Endothelial cell of umbilical vein (primary cell): ENCODE measurements at regions of chrX and their contacts with region 1.

Region 1: DNA sequence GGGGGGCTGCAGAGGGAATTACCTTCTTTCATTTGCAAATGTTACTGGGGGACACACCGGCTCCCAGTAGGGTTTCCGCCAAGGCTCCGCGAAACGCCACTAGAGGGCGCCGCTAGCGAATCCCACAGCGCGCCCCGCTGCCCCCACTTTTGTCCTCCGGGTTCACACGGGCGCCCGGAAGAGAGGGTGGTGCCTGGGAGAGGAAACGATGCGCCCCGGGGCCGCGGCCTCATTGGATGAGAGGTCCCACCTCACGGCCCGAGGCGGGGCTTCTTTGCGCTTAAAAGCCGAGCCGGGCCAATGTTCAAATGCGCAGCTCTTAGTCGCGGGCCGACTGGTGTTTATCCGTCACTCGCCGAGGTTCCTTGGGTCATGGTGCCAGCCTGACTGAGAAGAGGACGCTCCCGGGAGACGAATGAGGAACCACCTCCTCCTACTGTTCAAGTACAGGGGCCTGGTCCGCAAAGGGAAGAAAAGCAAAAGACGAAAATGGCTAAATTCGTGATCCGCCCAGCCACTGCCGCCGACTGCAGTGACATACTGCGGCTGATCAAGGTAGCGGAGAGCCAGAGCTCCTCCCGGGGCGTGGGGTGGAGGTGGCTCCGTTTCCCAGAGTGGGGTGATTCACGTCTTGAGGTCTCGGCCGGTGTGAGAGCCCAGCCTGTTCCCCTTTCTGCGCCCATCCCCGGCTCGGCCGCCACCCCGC is at the start of gene SAT1:
- DNase-seq: peak; percentile 92
- H3K4me3 ChIP-seq: peak within 1 kb of the TSS; percentile 56 to 90 (median 67)
- H3K27ac ChIP-seq: peak within 1 kb of the TSS; percentile 84
- H3K4me1 ChIP-seq: peaks cover 23% of the 10 kb centered on the region
- H3K27me3 ChIP-seq: no peaks in the 10 kb centered on the region
- CTCF ChIP-seq: peak; percentile 73 to 77
- POLR2A ChIP-seq: peak; percentile 99
- total RNA-seq, gene SAT1: 256 and 289 TPM in 2 replicates

Region 2: DNA sequence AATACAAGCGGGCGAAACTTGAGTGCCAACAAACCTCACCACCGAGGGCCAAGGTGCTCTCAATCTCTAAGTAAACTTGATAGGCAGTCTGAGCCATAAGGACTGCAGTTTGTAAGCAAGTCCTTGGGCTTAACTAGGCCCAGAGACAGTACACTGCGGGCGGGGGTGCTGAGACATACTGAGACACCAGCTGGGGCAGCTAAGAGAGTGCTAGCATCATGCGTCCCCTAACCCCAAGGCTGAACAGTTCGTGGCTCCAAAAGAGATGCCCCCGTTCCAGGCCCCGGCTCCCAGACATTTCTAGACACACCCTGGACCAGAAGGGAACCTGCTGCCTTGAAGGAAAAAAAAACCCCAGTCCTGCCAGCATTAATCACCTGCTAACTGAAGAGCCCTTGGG is 242.5 kb before region 1 on chrX:
- CTCF ChIA-PET with region 1: no interaction called
- POLR2A ChIA-PET with region 1: no interaction called
- dilution Hi-C with region 1: no loop called
- intact Hi-C with region 1: no loop called
- DNase-seq: no peak
- H3K4me3 ChIP-seq: no peak overlapping the region
- H3K27ac ChIP-seq: no peak overlapping the region
- H3K4me1 ChIP-seq: no peaks in the 10 kb centered on the region
- H3K27me3 ChIP-seq: no peaks in the 10 kb centered on the region
- CTCF ChIP-seq: no peak
- POLR2A ChIP-seq: no peak

Region 3: DNA sequence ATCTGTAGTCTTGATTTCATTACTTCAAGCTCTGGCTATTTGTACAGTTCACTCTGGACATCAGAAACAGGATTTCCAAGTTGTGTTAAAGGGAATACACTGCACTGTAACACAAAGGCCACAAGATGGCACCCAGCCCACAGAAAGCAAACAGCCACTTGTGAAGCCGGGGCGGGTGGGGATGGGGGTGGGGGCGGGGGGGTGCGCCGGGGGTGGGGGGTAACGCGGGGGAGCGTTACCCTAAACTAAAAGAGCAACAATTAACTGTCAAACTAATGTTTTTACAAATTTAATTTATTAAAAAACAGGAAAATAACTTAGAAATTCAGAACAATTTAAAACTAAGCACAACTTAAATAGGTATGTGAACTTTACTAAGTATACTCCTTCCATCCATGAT is 88.4 kb before region 1 on chrX:
- CTCF ChIA-PET with region 1: no interaction called
- POLR2A ChIA-PET with region 1: no interaction called
- dilution Hi-C with region 1: no loop called
- intact Hi-C with region 1: loop called (anchors 10 kb)
- DNase-seq: peak; percentile 42
- H3K4me3 ChIP-seq: no peak overlapping the region
- H3K27ac ChIP-seq: no peak overlapping the region
- H3K4me1 ChIP-seq: no peaks in the 10 kb centered on the region
- H3K27me3 ChIP-seq: no peaks in the 10 kb centered on the region
- CTCF ChIP-seq: peak; percentile 5 to 33
- POLR2A ChIP-seq: no peak

Region 4: GRCh38 chrX:23742697-23743622 is 40.1 kb before region 1 on chrX and contains the start of gene ACOT9:
- CTCF ChIA-PET with region 1: interaction called, 6 read pairs
- POLR2A ChIA-PET with region 1: interaction called, 16 read pairs
- dilution Hi-C with region 1: no loop called
- intact Hi-C with region 1: loop called (anchors 1 kb)
- DNase-seq: peak; percentile 94
- H3K4me3 ChIP-seq: peak within 1 kb of the TSS; percentile 46 to 94 (median 90)
- H3K27ac ChIP-seq: peak within 1 kb of the TSS; percentile 94
- H3K4me1 ChIP-seq: peaks cover 13% of the 10 kb centered on the region
- H3K27me3 ChIP-seq: no peaks in the 10 kb centered on the region
- CTCF ChIP-seq: no peak
- POLR2A ChIP-seq: peak; percentile 79
- total RNA-seq, gene ACOT9: 83.1 and 88.5 TPM in 2 replicates

Region 5: DNA sequence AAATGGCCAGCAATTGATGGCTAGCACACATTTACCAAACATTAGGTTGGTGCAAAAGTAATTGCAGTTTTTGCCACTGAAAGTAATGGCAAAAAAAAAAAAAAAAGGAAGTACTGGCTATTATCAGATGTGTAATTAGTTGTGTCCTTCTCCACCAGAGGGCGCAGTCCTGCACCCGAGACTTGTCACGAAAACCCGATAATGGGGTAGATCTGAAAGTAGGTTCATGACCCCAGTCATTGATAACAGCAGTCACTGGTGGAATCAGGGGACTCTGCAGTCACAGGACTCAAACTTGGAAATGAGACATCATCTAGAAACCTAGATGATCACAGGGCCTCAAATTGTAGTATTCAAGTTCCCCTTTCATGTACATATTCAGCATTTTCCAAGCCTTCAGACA is 26.9 kb before region 1 on chrX:
- CTCF ChIA-PET with region 1: interaction called, 4 read pairs
- POLR2A ChIA-PET with region 1: no interaction called
- dilution Hi-C with region 1: no loop called
- intact Hi-C with region 1: loop called (anchors 1 kb)
- DNase-seq: peak; percentile 54
- H3K4me3 ChIP-seq: no peak overlapping the region
- H3K27ac ChIP-seq: no peak overlapping the region
- H3K4me1 ChIP-seq: no peaks in the 10 kb centered on the region
- H3K27me3 ChIP-seq: no peaks in the 10 kb centered on the region
- CTCF ChIP-seq: peak; percentile 32 to 34
- POLR2A ChIP-seq: no peak

Region 6: DNA sequence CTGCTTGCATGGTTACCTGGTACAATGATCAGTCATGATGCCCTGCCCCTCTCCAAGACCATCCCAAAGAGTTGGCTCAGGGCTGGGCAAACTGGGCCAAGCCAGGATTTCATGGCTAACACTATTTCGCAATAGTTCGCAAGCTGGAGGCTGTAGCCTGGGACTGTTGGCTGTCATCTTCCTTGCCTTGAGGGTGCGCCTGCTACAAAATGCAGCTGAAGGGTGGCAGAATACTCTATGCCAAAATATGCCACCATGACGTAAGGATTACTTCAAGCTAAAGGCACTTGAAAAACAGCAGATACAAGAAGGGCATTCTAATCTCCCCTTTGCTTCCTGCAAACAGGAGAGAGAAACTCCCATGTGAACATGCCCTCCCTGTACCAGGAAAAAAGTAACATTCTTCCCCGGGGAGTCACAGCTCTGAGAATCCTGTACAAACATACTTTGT is 20.9 kb after region 1 on chrX:
- CTCF ChIA-PET with region 1: interaction called, 12 read pairs
- POLR2A ChIA-PET with region 1: interaction called, 18 read pairs
- dilution Hi-C with region 1: no loop called
- intact Hi-C with region 1: loop called (anchors 1 kb)
- DNase-seq: peak; percentile 86
- H3K4me3 ChIP-seq: no peak overlapping the region
- H3K27ac ChIP-seq: peak overlapping the region; percentile 74
- H3K4me1 ChIP-seq: peaks cover 29% of the 10 kb centered on the region
- H3K27me3 ChIP-seq: no peaks in the 10 kb centered on the region
- CTCF ChIP-seq: no peak
- POLR2A ChIP-seq: no peak

Region 7: DNA sequence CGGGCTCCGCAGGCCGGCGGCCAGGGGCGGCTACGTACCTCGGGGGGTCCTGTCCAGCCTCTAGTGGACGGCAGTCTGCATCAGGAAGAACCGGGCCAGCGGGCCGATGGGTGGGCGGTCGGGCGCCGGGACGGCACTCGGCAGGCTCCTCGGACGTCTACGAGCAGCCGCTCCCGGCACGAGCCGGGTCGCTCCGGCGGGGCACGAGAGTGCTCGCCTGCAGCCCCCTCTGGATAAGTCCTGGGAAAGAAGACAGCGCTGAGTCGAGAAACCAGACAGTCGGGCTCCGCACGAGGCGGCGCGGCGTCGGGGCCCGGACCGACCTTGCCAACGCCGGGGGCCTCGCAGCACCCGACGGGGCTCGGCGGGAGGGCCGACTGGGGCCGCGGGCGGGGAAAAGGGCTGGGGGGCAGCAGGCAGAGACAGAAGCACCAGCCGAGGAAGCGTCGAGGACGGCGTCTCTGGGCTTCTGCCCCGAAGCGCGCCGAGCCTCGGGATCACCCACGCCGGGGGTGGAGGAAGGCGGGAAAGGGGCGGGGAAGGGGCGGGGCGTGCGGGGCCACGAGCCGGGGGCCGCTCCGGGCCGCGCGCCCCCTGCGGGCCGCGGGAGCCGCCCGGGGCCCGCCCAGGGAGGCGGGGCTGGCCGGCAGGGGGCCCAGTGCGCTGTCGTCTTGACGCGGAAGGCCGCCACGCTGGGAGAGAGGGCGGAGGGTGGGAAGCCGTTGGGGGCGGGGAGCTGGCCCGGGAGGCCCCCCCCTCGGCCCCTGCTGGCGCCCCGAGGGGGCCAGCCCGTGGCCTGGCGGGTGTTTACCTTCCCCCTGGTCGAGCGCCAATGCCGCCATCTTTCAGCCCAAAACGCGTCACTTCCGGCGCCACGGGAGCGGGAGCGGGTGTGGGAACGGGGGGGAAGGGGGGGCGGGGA is 242.1 kb after region 1 on chrX:
- CTCF ChIA-PET with region 1: no interaction called
- POLR2A ChIA-PET with region 1: interaction called, 5 read pairs
- dilution Hi-C with region 1: no loop called
- intact Hi-C with region 1: loop called (anchors 5 kb)
- DNase-seq: peak; percentile 86
- H3K4me3 ChIP-seq: peak overlapping the region; percentile 81 to 93 (median 86)
- H3K27ac ChIP-seq: peak overlapping the region; percentile 90
- H3K4me1 ChIP-seq: peaks cover 8% of the 10 kb centered on the region
- H3K27me3 ChIP-seq: no peaks in the 10 kb centered on the region
- CTCF ChIP-seq: peak in 1 of 2 donors; percentile 20
- POLR2A ChIP-seq: peak; percentile 81

Region 8: DNA sequence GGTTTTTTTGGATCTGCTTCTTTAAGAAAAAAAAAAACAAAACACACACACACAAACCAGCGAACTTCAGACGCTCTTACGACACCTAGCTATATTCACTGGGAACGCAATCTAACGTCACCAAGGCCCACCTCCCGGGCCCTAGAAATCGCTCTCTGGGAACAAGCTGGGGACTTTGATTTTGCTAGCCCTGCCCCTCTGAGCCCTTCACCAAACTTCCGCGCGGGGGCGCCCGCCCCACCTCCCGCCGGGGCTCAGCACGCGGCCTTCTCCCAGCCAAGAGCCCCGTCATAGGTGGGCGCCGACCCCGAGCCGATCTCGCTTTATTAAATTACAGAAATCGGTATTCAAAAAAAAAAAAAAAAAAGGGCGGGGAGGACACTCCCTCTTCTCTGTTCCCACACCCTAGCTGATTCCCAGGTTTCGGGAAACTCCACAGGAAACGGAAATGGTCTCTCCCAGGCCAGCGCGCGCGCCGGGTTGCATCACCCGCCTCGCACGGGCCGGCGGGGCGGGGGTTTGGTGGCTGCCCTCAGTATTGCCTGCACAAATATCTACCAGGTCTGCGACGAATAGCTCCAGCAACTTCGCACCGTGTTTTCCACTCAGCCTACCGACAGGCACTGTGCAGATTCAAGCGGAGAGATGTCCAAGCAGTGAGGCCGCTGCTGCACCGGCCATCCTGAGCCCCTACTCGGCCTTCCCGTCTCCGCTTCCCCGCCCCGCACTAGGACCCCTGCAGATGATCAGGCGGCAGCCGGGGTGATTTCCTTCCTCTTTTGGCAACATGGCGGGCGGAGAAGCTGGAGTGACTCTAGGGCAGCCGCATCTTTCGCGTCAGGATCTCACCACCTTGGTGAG is 271.4 kb after region 1 on chrX and contains the start of gene EIF2S3:
- CTCF ChIA-PET with region 1: interaction called, 4 read pairs
- POLR2A ChIA-PET with region 1: interaction called, 12 read pairs
- dilution Hi-C with region 1: no loop called
- intact Hi-C with region 1: loop called (anchors 2 kb)
- DNase-seq: peak; percentile 95
- H3K4me3 ChIP-seq: peak within 1 kb of the TSS in 2 of 3 experiments; percentile 49 to 85
- H3K27ac ChIP-seq: peak within 1 kb of the TSS; percentile 79
- H3K4me1 ChIP-seq: peaks cover 5% of the 10 kb centered on the region
- H3K27me3 ChIP-seq: no peaks in the 10 kb centered on the region
- CTCF ChIP-seq: peak; percentile 53 to 68
- POLR2A ChIP-seq: peak; percentile 66
- total RNA-seq, gene EIF2S3: 152 and 161 TPM in 2 replicates